ENCODE measurements at regions of chr3 and their contacts with region 1.

Region 1: DNA sequence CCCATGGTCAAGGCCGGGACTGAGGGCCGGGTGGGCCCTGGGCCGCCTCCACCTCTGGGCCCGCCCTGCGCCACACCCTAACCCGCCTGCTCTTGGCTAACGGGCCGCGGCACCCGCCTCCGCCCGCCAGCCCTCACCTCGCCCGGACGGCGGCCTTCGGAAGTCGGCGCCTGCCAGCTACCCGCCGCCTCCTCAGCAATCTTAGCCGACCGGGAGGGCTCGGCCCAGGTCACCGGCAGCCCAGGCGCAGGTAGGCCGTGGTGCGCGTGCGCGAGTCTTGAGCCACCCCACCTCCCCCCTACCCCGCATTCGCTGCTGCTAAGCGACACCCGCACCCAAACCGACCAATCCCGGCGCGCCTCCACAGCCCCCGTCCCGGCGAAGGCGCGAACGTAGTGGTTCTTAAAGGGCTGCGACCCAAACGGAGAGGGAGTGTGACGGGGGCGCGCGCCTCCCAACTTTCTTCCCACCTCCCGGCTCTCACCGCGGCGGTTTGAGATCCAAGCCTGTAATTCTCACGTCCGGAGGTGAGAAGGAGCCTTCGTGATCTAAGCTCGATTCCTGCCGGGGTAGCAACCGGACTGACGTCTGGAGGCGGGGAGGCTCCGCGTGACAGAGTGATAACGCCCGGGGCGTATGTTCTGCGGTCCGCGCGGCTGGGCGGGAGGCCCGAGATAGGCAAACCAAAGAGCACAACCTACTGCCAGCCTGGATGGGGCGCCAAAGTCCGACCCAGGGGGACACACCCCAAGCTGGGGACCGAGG is at the start of gene SEC22C:
- DNase-seq: peak; percentile 96
- ATAC-seq: peak; percentile 99
- total RNA-seq, gene SEC22C: 24.4 to 29.8 TPM

Region 2: DNA sequence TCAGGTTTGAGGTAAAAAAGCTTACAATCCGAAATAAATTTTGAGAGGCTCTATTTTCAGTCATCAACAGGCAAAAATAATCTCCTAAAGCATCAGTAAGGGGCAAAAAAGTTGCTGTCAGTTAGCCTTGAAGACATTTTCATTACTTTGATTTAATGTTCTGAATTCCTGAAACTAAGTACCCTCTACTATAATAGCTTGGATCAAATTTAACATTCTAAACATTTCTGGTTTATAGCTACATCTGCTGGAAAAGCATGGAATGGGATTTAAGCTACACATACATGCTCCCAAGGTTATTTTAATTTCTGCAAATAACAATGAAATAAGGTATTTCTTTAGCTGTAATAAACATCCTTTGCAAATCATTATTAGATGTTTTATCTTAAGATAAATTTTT is 865.4 kb before region 1 on chr3:
- intact Hi-C with region 1: no loop called
- DNase-seq: no peak
- ATAC-seq: no peak

Region 3: GRCh38 chr3:42755681-42756578 is 174.0 kb after region 1 on chr3:
- intact Hi-C with region 1: loop called in 1 of 2 experiments (anchors 10 kb)
- DNase-seq: no peak
- ATAC-seq: peak; percentile 54 to 67

Measured in left cardiac atrium (tissue), 4 donors.